A549 (cell line): ENCODE measurements at regions of chr19 and their contacts with region 1.

Region 1: GRCh38 chr19:4139614-4140236 is 13.7 kb upstream of the CREB3L3 start:
- DNase-seq: peak; percentile 72 to 76
- ATAC-seq: peak; percentile 80 to 89
- H3K4me3 ChIP-seq: no peak overlapping the region
- H3K27ac ChIP-seq: peak overlapping the region; percentile 77 to 81
- H3K4me1 ChIP-seq: peaks cover 20% of the 10 kb centered on the region
- CTCF ChIP-seq: peak; percentile 52
- EP300 ChIP-seq: no peak
- POLR2A ChIP-seq: no peak
- RAD21 ChIP-seq: peak; percentile 52 to 54; a peak in 4 of 5 replicates

Region 2: DNA sequence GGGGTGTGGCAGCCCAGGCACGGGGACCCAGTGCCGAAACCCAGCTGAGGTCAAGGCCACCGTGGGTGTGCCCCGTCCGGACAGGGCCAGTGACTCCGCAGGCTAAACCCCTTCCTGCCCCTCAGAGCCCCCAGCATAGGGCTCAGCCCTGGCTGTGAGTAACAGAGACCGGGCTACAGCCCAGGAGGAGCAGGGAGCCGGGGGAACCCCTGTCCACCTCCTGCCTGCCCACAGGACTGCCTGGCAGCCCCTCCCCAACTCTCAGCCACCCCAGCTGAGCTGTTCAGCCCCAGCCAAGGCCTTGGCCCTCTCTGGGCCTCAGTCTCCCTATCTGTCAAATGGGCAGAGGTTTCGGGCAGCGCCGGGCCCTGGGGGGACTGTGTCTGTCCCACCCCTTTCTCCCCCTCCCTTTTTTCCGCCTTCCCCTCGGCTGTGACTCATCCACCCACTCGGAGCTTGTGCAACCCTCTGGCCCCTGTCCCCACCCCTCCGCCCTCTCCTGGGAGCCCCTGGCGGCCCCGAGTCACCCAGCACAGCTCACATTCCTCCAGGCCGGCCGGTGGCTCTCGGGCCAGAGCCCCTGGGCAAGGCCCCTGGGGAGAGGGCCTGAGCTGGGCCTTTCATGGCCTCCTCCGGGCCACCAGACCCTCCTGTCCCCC is 81.6 kb before region 1 on chr19:
- CTCF ChIA-PET with region 1: interaction called, 10 read pairs
- POLR2A ChIA-PET with region 1: no interaction called
- DNase-seq: peak; percentile 73 to 74
- ATAC-seq: peak; percentile 74 to 76
- H3K4me3 ChIP-seq: peak overlapping the region; percentile 26; the same call in 2 of the 3 replicates
- H3K27ac ChIP-seq: peak overlapping the region; percentile 93 to 96
- H3K4me1 ChIP-seq: peaks cover 62% of the 10 kb centered on the region
- CTCF ChIP-seq: no peak; the same call in 2 of the 3 replicates
- EP300 ChIP-seq: no peak
- POLR2A ChIP-seq: no peak
- RAD21 ChIP-seq: no peak

Region 3: DNA sequence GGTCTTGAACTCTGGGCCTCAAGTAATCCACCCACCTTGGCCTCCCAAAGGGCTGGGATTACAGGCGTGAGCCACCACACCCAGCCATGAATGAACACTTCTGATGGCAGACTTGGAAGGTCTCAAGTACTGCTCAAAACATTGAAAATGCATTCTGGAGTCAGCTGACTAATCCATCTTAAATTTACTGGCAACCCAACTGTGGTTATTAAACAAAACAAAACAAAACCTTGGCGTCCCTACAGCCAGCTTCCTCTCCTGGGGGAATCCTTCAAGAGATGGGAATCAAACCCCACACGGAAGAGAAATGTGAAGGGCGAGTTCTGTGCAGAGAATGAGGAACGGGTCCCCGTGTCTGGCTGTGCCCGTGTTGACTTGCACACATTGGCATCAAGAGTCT is 19.2 kb before region 1 on chr19:
- CTCF ChIA-PET with region 1: interaction called, 15 read pairs
- POLR2A ChIA-PET with region 1: no interaction called
- DNase-seq: no peak
- ATAC-seq: no peak
- H3K4me3 ChIP-seq: no peak overlapping the region
- H3K27ac ChIP-seq: no peak overlapping the region
- H3K4me1 ChIP-seq: peaks cover 16% of the 10 kb centered on the region
- CTCF ChIP-seq: no peak
- EP300 ChIP-seq: no peak
- POLR2A ChIP-seq: no peak
- RAD21 ChIP-seq: no peak

Region 4: GRCh38 chr19:4157164-4157563 is 17.4 kb after region 1 on chr19:
- CTCF ChIA-PET with region 1: interaction called, 31 read pairs
- POLR2A ChIA-PET with region 1: no interaction called
- DNase-seq: no peak
- ATAC-seq: no peak
- H3K4me3 ChIP-seq: no peak overlapping the region
- H3K27ac ChIP-seq: no peak overlapping the region
- H3K4me1 ChIP-seq: no peaks in the 10 kb centered on the region
- CTCF ChIP-seq: no peak
- EP300 ChIP-seq: no peak
- POLR2A ChIP-seq: no peak
- RAD21 ChIP-seq: no peak

Region 5: GRCh38 chr19:4164262-4164661 is 24.5 kb after region 1 on chr19:
- CTCF ChIA-PET with region 1: interaction called, 31 read pairs
- POLR2A ChIA-PET with region 1: no interaction called
- DNase-seq: no peak
- ATAC-seq: no peak; a peak in 1 of 6 replicates
- H3K4me3 ChIP-seq: no peak overlapping the region
- H3K27ac ChIP-seq: no peak overlapping the region
- H3K4me1 ChIP-seq: no peaks in the 10 kb centered on the region
- CTCF ChIP-seq: no peak
- EP300 ChIP-seq: no peak
- POLR2A ChIP-seq: no peak
- RAD21 ChIP-seq: no peak

Region 6: GRCh38 chr19:4187313-4188122 is 47.8 kb after region 1 on chr19:
- CTCF ChIA-PET with region 1: interaction called, 10 read pairs
- POLR2A ChIA-PET with region 1: no interaction called
- DNase-seq: no peak
- ATAC-seq: no peak
- H3K4me3 ChIP-seq: no peak overlapping the region
- H3K27ac ChIP-seq: no peak overlapping the region
- H3K4me1 ChIP-seq: peaks cover 3% of the 10 kb centered on the region; the same call in 1 of the 3 replicates
- CTCF ChIP-seq: no peak
- EP300 ChIP-seq: no peak
- POLR2A ChIP-seq: no peak
- RAD21 ChIP-seq: no peak

Region 7: GRCh38 chr19:4197625-4198466 is 58.1 kb after region 1 on chr19:
- CTCF ChIA-PET with region 1: interaction called, 66 read pairs
- POLR2A ChIA-PET with region 1: no interaction called
- DNase-seq: peak; percentile 39 to 55
- ATAC-seq: peak; percentile 49 to 55; a peak in 2 of 6 replicates
- H3K4me3 ChIP-seq: peak overlapping the region; percentile 43
- H3K27ac ChIP-seq: peak overlapping the region in 1 of 2 experiments; percentile 53; a peak in 1 of 6 replicates
- H3K4me1 ChIP-seq: peaks cover 15% of the 10 kb centered on the region; the same call in 2 of the 3 replicates
- CTCF ChIP-seq: no peak
- EP300 ChIP-seq: no peak
- POLR2A ChIP-seq: no peak
- RAD21 ChIP-seq: no peak

Region 8: GRCh38 chr19:4246767-4247593 is 107.3 kb after region 1 on chr19 and contains the start of gene YJU2:
- CTCF ChIA-PET with region 1: no interaction called
- POLR2A ChIA-PET with region 1: no interaction called
- DNase-seq: peak; percentile 97 to 98
- ATAC-seq: peak; percentile 95 to 97
- H3K4me3 ChIP-seq: peak within 1 kb of the TSS; percentile 48
- H3K27ac ChIP-seq: peak within 1 kb of the TSS; percentile 83 to 88
- H3K4me1 ChIP-seq: peaks cover 4% of the 10 kb centered on the region; the same call in 1 of the 3 replicates
- CTCF ChIP-seq: peak; percentile 47
- EP300 ChIP-seq: no peak
- POLR2A ChIP-seq: 0 out of 2 replicates have a peak, but pooled peaks have one; percentile 17
- RAD21 ChIP-seq: peak; percentile 25; a peak in 3 of 5 replicates
- polyA plus RNA-seq, gene YJU2: 11.4 and 12.3 TPM in 2 replicates